ENCODE measurements at regions of chr19 and their contacts with region 1.

Region 1: DNA sequence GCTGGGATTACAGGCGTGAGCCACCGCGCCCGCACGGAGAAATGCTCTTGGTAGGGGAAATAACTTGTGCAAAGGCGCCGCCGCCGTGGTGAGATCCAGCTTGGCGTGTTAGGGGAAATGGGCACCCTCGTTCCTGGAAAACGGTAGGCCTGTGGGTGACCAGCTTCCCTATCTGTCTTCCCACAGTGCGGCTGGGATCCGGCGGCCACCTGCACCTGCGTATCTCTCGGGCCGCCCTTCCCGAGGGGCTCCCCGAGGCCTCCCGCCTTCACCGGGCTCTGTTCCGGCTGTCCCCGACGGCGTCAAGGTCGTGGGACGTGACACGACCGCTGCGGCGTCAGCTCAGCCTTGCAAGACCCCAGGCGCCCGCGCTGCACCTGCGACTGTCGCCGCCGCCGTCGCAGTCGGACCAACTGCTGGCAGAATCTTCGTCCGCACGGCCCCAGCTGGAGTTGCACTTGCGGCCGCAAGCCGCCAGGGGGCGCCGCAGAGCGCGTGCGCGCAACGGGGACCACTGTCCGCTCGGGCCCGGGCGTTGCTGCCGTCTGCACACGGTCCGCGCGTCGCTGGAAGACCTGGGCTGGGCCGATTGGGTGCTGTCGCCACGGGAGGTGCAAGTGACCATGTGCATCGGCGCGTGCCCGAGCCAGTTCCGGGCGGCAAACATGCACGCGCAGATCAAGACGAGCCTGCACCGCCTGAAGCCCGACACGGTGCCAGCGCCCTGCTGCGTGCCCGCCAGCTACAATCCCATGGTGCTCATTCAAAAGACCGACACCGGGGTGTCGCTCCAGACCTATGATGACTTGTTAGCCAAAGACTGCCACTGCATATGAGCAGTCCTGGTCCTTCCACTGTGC is 2.4 kb downstream of the GDF15 start:
- DNase-seq: peak; percentile 62 to 83 (median 70)
- H3K4me3 ChIP-seq: peak overlapping the region; percentile 45
- H3K4me3 Mint-ChIP-seq: peak overlapping the region in 6 of 7 donors; percentile 71 to 83 (median 78)
- H3K27ac ChIP-seq: peak overlapping the region; percentile 61
- H3K27ac Mint-ChIP-seq: peak overlapping the region in 1 of 8 donors; percentile 9
- H3K4me1 ChIP-seq: no peaks in the 10 kb centered on the region
- H3K4me1 Mint-ChIP-seq: peaks cover 5 to 13% (median 11%) of the 10 kb centered on the region in 3 donors
- H3K27me3 ChIP-seq: peaks cover 22% of the 10 kb centered on the region
- H3K27me3 Mint-ChIP-seq: peaks cover 16 to 34% of the 10 kb centered on the region in 2 donors

Region 2: DNA sequence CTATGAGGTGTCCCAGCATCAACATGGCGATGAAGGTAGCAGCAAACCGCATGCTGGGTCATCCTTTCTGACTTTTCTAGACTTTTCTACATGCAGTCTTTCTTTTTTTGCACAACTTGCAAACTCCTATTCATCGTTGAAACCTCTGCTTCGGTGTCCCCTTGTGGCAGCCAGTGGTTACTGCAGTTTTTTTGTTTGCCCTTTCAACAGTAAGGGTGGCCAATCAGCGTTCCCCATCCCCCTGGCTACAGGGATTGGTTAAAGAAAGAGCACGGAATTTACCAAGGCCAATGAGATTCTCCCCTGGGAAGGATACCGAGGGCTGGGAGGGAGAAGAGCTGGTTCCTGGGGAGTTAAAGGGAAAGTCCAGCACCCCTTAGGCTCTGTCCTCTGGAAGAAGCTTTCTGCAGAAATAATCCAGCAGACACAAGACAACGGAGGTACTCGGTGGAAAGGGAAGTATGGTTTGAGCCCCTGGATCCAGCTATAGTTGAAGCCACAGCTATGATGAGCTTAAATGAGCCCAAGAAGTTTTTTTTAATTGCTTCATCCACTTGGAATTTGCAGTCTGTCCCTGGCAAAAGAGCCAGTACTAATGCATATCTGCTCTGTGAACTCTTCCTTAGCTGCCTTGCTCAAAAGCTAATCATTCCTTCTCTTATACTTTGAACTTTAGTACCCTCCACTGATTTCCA is 59.8 kb before region 1 on chr19:
- CTCF ChIA-PET with region 1: interaction called, 15 read pairs
- POLR2A ChIA-PET with region 1: interaction called, 4 read pairs
- DNase-seq: peak; percentile 73 to 92 (median 86)
- H3K4me3 ChIP-seq: peak overlapping the region; percentile 50
- H3K4me3 Mint-ChIP-seq: peak overlapping the region; percentile 60 to 79 (median 69)
- H3K27ac ChIP-seq: peak overlapping the region; percentile 1
- H3K27ac Mint-ChIP-seq: peak overlapping the region in 7 of 8 donors; percentile 6 to 61 (median 42)
- H3K4me1 ChIP-seq: peaks cover 16% of the 10 kb centered on the region
- H3K4me1 Mint-ChIP-seq: peaks cover 15 to 19% (median 16%) of the 10 kb centered on the region in 3 donors
- H3K27me3 ChIP-seq: no peaks in the 10 kb centered on the region
- H3K27me3 Mint-ChIP-seq: peaks cover 0 to 3% of the 10 kb centered on the region in 2 donors

Region 3: GRCh38 chr19:18357041-18357440 is 31.3 kb before region 1 on chr19:
- CTCF ChIA-PET with region 1: interaction called, 11 read pairs
- POLR2A ChIA-PET with region 1: no interaction called
- DNase-seq: no peak
- H3K4me3 ChIP-seq: no peak overlapping the region
- H3K4me3 Mint-ChIP-seq: no peak overlapping the region
- H3K27ac ChIP-seq: no peak overlapping the region
- H3K27ac Mint-ChIP-seq: peak overlapping the region in 1 of 8 donors; percentile 33
- H3K4me1 ChIP-seq: no peaks in the 10 kb centered on the region
- H3K4me1 Mint-ChIP-seq: no peaks in the 10 kb centered on the region
- H3K27me3 ChIP-seq: no peaks in the 10 kb centered on the region
- H3K27me3 Mint-ChIP-seq: peaks cover 0 to 1% of the 10 kb centered on the region in 2 donors

Region 4: DNA sequence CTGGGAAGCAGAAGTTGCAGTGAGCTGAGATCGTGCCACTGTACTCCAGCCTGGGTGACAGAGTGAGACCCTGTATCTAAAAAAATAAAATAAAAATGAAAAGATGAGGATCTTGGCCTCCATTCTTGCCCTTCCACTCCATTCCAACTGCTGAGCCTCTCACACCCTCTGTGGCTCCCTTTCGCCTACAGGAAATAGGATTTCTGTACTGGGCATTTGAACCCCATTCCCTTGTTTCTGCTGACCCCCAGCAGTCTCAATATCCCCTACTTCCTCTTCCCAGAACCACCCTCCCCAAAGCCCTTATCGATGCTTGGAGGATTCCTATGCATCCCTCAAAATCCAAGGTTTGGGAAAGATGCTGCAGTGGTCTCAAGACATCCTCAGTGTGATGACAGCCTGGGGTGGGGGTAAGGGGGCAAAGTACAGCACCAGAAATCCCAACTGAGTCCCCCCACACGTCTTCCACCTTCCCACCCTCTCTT is 14.9 kb before region 1 on chr19:
- CTCF ChIA-PET with region 1: interaction called, 11 read pairs
- POLR2A ChIA-PET with region 1: no interaction called
- DNase-seq: no peak
- H3K4me3 ChIP-seq: no peak overlapping the region
- H3K4me3 Mint-ChIP-seq: peak overlapping the region in 3 of 7 donors; percentile 4 to 76 (median 17)
- H3K27ac ChIP-seq: peak overlapping the region; percentile 80
- H3K27ac Mint-ChIP-seq: peak overlapping the region in 3 of 8 donors; percentile 26 to 63 (median 44)
- H3K4me1 ChIP-seq: peaks cover 9% of the 10 kb centered on the region
- H3K4me1 Mint-ChIP-seq: peaks cover 9 to 15% (median 14%) of the 10 kb centered on the region in 3 donors
- H3K27me3 ChIP-seq: no peaks in the 10 kb centered on the region
- H3K27me3 Mint-ChIP-seq: no peaks in the 10 kb centered on the region

Region 5: DNA sequence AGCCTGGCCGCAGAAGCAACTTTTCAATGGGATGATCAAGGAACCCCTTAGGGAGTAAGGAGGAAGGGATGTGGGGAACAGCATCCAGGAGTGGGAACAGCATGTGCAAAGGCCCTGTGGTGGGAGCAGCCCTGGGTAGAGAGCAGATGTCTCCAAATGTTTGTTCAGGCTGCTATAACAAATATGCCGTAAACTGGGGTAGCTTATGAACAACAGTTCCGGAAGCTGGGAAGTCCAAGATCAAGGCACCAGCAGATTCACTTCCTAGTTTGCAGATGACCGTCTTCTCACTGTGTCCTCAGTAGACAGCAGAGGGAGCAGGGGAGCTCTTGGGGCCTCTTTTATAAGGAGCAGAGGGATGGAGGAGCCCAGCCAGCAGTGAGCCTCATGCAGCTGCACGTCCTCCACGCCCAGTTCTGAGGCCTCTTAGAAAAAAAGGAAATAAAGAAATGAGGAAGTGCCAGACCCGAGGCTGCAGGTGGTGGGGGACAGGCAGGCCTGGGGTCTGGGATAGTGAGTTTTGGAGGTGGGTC is 13.3 kb after region 1 on chr19:
- CTCF ChIA-PET with region 1: interaction called, 14 read pairs
- POLR2A ChIA-PET with region 1: no interaction called
- DNase-seq: no peak
- H3K4me3 ChIP-seq: no peak overlapping the region
- H3K4me3 Mint-ChIP-seq: no peak overlapping the region
- H3K27ac ChIP-seq: peak overlapping the region; percentile 21
- H3K27ac Mint-ChIP-seq: no peak overlapping the region
- H3K4me1 ChIP-seq: peaks cover 6% of the 10 kb centered on the region
- H3K4me1 Mint-ChIP-seq: peaks cover 0 to 6% (median 0%) of the 10 kb centered on the region in 3 donors
- H3K27me3 ChIP-seq: peaks cover 16% of the 10 kb centered on the region
- H3K27me3 Mint-ChIP-seq: peaks cover 14 to 17% of the 10 kb centered on the region in 2 donors

Region 6: GRCh38 chr19:18419195-18419698 is 30.9 kb after region 1 on chr19 and contains the start of gene SSBP4:
- CTCF ChIA-PET with region 1: interaction called, 100 read pairs
- POLR2A ChIA-PET with region 1: interaction called, 3 read pairs
- DNase-seq: peak; percentile 59 to 83 (median 75)
- H3K4me3 ChIP-seq: peak within 1 kb of the TSS; percentile 81
- H3K4me3 Mint-ChIP-seq: peak within 1 kb of the TSS; percentile 90 to 98 (median 94)
- H3K27ac ChIP-seq: peak within 1 kb of the TSS; percentile 83
- H3K27ac Mint-ChIP-seq: peak within 1 kb of the TSS; percentile 94 to 100 (median 98)
- H3K4me1 ChIP-seq: peaks cover 86% of the 10 kb centered on the region
- H3K4me1 Mint-ChIP-seq: peaks cover 70 to 88% (median 87%) of the 10 kb centered on the region in 3 donors
- H3K27me3 ChIP-seq: peaks cover 4% of the 10 kb centered on the region
- H3K27me3 Mint-ChIP-seq: peaks cover 0 to 6% of the 10 kb centered on the region in 2 donors
- total RNA-seq, gene SSBP4: 111 to 131 TPM

Region 7: GRCh38 chr19:18450931-18451845 is 62.9 kb after region 1 on chr19:
- CTCF ChIA-PET with region 1: interaction called, 10 read pairs
- POLR2A ChIA-PET with region 1: no interaction called
- DNase-seq: peak; percentile 78 to 89 (median 83)
- H3K4me3 ChIP-seq: no peak overlapping the region
- H3K4me3 Mint-ChIP-seq: peak overlapping the region in 1 of 7 donors; percentile 84
- H3K27ac ChIP-seq: no peak overlapping the region
- H3K27ac Mint-ChIP-seq: peak overlapping the region in 5 of 8 donors; percentile 14 to 94 (median 80)
- H3K4me1 ChIP-seq: no peaks in the 10 kb centered on the region
- H3K4me1 Mint-ChIP-seq: peaks cover 4 to 8% (median 5%) of the 10 kb centered on the region in 3 donors
- H3K27me3 ChIP-seq: no peaks in the 10 kb centered on the region
- H3K27me3 Mint-ChIP-seq: no peaks in the 10 kb centered on the region

Region 8: GRCh38 chr19:18475004-18475453 is 86.7 kb after region 1 on chr19:
- CTCF ChIA-PET with region 1: no interaction called
- POLR2A ChIA-PET with region 1: no interaction called
- DNase-seq: peak in 4 of 5 donors; percentile 35 to 81 (median 57)
- H3K4me3 ChIP-seq: peak overlapping the region; percentile 8
- H3K4me3 Mint-ChIP-seq: peak overlapping the region; percentile 58 to 92 (median 72)
- H3K27ac ChIP-seq: peak overlapping the region; percentile 76
- H3K27ac Mint-ChIP-seq: peak overlapping the region; percentile 93 to 100 (median 96)
- H3K4me1 ChIP-seq: peaks cover 59% of the 10 kb centered on the region
- H3K4me1 Mint-ChIP-seq: peaks cover 73 to 90% (median 81%) of the 10 kb centered on the region in 3 donors
- H3K27me3 ChIP-seq: no peaks in the 10 kb centered on the region
- H3K27me3 Mint-ChIP-seq: no peaks in the 10 kb centered on the region

Measured in CD8-positive, alpha-beta memory T cell (primary cell).